ENCODE measurements at regions of chr19 and their contacts with region 1.

Region 1: GRCh38 chr19:45092747-45093678 is at the start of gene PPP1R37:
- DNase-seq: peak; percentile 99 to 100
- ATAC-seq: peak; percentile 78 to 84
- H3K4me3 ChIP-seq: peak within 1 kb of the TSS; percentile 86
- H3K27ac ChIP-seq: peak within 1 kb of the TSS; percentile 92 to 94
- H3K4me1 ChIP-seq: peaks cover 46% of the 10 kb centered on the region
- CTCF ChIP-seq: peak; percentile 18; the same call in 2 of the 3 replicates
- EP300 ChIP-seq: no peak
- POLR2A ChIP-seq: peak; percentile 35
- RAD21 ChIP-seq: 0 out of 5 replicates have a peak, but pooled peaks of 1 of the 2 experiments have one; percentile 10
- polyA plus RNA-seq, gene PPP1R37: 7.6 and 9.1 TPM in 2 replicates

Region 2: GRCh38 chr19:45079063-45079910 is 13.7 kb before region 1 on chr19 and contains the start of gene GEMIN7:
- CTCF ChIA-PET with region 1: interaction called, 9 read pairs
- POLR2A ChIA-PET with region 1: interaction called, 22 read pairs
- DNase-seq: peak; percentile 83 to 88
- ATAC-seq: peak; percentile 66 to 80
- H3K4me3 ChIP-seq: peak within 1 kb of the TSS; percentile 96
- H3K27ac ChIP-seq: peak within 1 kb of the TSS; percentile 91 to 95
- H3K4me1 ChIP-seq: peaks cover 31% of the 10 kb centered on the region
- CTCF ChIP-seq: no peak; the same call in 2 of the 3 replicates
- EP300 ChIP-seq: peak in 1 of 2 experiments; percentile 24; a peak in 1 of 5 replicates
- POLR2A ChIP-seq: peak; percentile 85
- RAD21 ChIP-seq: peak in 1 of 2 experiments; percentile 32; a peak in 1 of 5 replicates
- polyA plus RNA-seq, gene GEMIN7: 42.2 and 49.2 TPM in 2 replicates

Region 3: DNA sequence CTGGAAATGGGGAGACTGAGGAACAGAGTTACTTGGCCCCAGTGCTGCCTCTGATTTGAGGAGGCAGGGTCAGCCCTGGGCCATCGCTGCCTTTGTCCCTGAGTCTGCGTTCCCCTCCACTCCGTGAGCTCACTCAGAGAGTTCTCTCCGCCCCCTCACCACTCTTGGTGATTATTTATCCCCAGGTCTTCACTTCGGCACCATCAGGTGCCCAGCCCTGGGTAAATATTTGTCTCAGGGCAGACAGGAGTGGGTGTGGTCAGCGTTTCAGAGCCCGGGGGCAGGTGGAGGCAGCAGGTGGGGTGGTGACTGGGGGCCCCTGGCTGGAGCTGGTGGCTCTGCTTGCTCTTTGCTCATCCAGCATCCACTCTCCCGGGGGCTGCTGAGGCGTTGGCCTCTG is 20.6 kb after region 1 on chr19:
- CTCF ChIA-PET with region 1: interaction called, 16 read pairs
- POLR2A ChIA-PET with region 1: interaction called, 4 read pairs
- DNase-seq: no peak
- ATAC-seq: no peak
- H3K4me3 ChIP-seq: no peak overlapping the region
- H3K27ac ChIP-seq: peak overlapping the region in 1 of 2 experiments; percentile 32; a peak in 2 of 6 replicates
- H3K4me1 ChIP-seq: peaks cover 15% of the 10 kb centered on the region
- CTCF ChIP-seq: no peak
- EP300 ChIP-seq: no peak
- POLR2A ChIP-seq: no peak
- RAD21 ChIP-seq: no peak

Region 4: GRCh38 chr19:45130888-45131615 is 38.0 kb after region 1 on chr19:
- CTCF ChIA-PET with region 1: interaction called, 46 read pairs
- POLR2A ChIA-PET with region 1: interaction called, 6 read pairs
- DNase-seq: peak; percentile 54
- ATAC-seq: peak; percentile 86 to 88
- H3K4me3 ChIP-seq: no peak overlapping the region
- H3K27ac ChIP-seq: peak overlapping the region in 1 of 2 experiments; percentile 13; a peak in 2 of 6 replicates
- H3K4me1 ChIP-seq: peaks cover 10% of the 10 kb centered on the region
- CTCF ChIP-seq: peak; percentile 51
- EP300 ChIP-seq: no peak
- POLR2A ChIP-seq: no peak
- RAD21 ChIP-seq: peak; percentile 31 to 48; a peak in 3 of 5 replicates

Measured in A549 (cell line).